Motor neuron (in vitro differentiated cells): ENCODE measurements at regions of chr1 and their contacts with region 1.

Region 1: GRCh38 chr1:209692745-209693504 is 11.7 kb upstream of the HSD11B1 start:
- ATAC-seq: peak; percentile 46 to 78 (median 66)
- H3K4me3 ChIP-seq: no peak overlapping the region
- H3K27ac ChIP-seq: no peak overlapping the region
- H3K4me1 ChIP-seq: peaks cover 3% of the 10 kb centered on the region in 2 donors

Region 2: GRCh38 chr1:209585672-209586071 is 107.3 kb before region 1 on chr1:
- in situ Hi-C with region 1: loop called in 5 of 9 experiments (anchors 10 to 25 kb)
- ATAC-seq: peak; percentile 69 to 77 (median 73)
- H3K4me3 ChIP-seq: peak overlapping the region in 4 of 5 donors; percentile 10 to 16 (median 12)
- H3K27ac ChIP-seq: no peak overlapping the region
- H3K4me1 ChIP-seq: peaks cover 25 to 35% of the 10 kb centered on the region in 2 donors

Region 3: DNA sequence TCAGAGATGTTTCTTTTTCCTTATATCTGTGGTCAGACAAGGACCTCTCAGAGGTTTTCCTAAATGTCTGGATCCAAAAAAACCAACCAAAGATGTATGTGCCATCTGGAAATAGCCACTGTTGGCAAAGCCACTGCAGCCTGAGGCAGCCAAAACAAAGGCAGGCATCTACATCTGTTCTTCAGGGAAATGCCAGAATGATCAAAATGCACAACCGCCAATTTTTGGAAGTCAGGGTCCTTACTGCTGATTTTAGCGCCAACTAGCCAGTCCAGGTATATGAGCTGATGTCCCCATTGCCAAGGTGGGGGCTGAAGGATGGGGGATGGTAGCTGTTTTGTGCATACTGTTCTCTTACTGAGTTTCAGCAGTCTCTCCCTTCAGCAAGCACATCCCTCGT is 291.0 kb after region 1 on chr1:
- in situ Hi-C with region 1: no loop called
- ATAC-seq: no peak
- H3K4me3 ChIP-seq: no peak overlapping the region
- H3K27ac ChIP-seq: no peak overlapping the region
- H3K4me1 ChIP-seq: no peaks in the 10 kb centered on the region